A673 (cell line): ENCODE measurements at regions of chr20 and their contacts with region 1.

Region 1: DNA sequence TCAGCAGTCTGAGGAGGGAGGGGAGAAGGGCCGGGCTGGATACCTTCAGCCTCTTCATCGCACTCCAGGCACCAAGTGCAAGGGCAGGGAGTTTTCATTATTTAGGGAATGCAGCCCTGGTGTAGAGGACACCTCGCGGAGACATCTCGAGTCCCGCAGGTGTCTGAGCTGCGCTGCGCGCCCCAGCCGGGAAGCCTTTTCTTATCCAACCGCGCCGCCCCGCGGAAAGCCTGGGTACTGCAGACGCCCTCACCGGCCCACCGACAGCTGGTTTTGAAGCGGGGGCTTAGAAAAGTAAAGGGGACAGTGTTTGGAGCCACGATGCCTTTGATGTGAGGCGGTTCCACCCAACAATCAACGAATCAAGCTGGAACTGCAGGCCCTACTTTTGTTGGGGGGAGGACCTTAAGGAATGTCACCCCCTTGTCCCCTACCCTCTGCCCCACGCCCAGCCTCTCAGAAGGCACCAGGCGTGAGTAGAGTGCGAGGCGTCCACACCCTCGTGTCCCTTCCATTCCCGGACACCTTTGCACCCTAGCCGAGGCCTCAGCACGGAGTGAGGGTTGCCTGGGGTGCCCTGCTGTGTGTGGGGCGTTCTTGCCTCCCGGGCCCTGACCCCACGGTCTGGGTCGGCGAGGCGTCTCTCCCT is 8.6 kb downstream of the NKX2-2 start:
- DNase-seq: peak; percentile 77
- H3K4me3 ChIP-seq: peak overlapping the region; percentile 46
- H3K27ac ChIP-seq: peak overlapping the region; percentile 68
- H3K4me1 ChIP-seq: peaks cover 37% of the 10 kb centered on the region
- H3K27me3 ChIP-seq: no peaks in the 10 kb centered on the region
- CTCF ChIP-seq: peak; percentile 97

Region 2: GRCh38 chr20:20664795-20665589 is 840.3 kb before region 1 on chr20:
- CTCF ChIA-PET with region 1: no interaction called
- POLR2A ChIA-PET with region 1: no interaction called
- intact Hi-C with region 1: loop called (anchors 5 kb)
- DNase-seq: peak; percentile 70
- H3K4me3 ChIP-seq: no peak overlapping the region
- H3K27ac ChIP-seq: no peak overlapping the region
- H3K4me1 ChIP-seq: peaks cover 28% of the 10 kb centered on the region
- H3K27me3 ChIP-seq: no peaks in the 10 kb centered on the region
- CTCF ChIP-seq: peak; percentile 76

Region 3: GRCh38 chr20:20837574-20838021 is 667.7 kb before region 1 on chr20:
- CTCF ChIA-PET with region 1: interaction called, 7 read pairs
- POLR2A ChIA-PET with region 1: no interaction called
- intact Hi-C with region 1: loop called (anchors 5 kb)
- DNase-seq: peak; percentile 82
- H3K4me3 ChIP-seq: no peak overlapping the region
- H3K27ac ChIP-seq: no peak overlapping the region
- H3K4me1 ChIP-seq: no peaks in the 10 kb centered on the region
- H3K27me3 ChIP-seq: no peaks in the 10 kb centered on the region
- CTCF ChIP-seq: peak; percentile 88

Region 4: DNA sequence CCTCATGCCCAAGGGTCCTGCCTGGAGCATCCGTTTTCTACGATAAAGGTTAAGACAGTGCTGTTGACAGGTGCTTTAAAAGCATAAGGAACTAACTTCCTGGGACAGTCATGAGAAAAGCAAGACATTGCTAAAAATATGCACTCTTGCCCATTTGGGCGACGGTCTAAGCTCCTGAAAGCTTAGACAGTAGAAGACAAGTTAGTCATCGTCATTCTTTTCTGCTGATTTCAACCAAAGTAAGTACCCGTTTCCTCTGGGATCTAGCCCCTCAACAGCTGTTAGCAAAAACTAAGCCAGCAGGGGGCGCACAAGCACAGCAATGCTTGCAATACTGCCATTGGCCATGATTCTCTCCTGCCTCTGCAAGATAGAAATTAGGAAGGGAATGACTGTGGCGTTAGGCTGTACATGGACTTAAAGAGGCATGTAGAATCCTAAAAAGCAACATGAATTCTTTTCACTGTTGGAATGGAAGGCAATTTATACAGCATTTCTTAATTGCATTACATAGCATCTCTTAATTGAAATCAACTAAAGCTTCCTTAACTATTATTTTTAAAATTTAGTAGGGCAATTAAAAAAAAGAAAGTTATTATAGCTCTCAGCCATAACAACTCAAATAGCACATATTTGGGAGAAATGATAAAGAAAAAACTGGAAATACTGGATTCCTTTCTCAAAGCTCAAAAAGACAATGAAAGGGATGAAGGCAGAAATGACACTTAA is 645.0 kb before region 1 on chr20:
- CTCF ChIA-PET with region 1: interaction called, 6 read pairs
- POLR2A ChIA-PET with region 1: no interaction called
- intact Hi-C with region 1: loop called (anchors 2 kb)
- DNase-seq: peak; percentile 93
- H3K4me3 ChIP-seq: no peak overlapping the region
- H3K27ac ChIP-seq: no peak overlapping the region
- H3K4me1 ChIP-seq: no peaks in the 10 kb centered on the region
- H3K27me3 ChIP-seq: no peaks in the 10 kb centered on the region
- CTCF ChIP-seq: peak; percentile 97

Region 5: DNA sequence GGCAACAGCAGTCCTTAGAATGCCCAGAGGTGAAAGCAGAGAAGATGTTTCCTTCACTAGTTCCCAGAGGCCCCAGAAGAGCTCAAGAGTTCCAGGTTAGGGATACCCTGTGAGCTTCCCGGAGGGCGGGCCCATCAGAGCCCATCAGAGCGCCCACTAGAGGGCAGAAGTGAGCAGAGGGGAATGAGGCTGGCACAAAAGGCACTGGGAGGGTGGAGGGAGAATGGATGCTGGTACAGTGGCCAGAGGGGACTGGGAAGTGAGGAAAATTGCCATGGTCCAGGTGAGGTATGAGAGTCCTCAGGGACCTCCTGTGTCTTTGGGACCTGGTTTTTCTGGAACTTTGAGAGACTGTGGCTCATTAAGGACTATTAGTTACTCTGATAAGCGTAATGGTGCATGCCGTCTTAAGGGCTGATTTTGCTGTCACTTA is 456.4 kb before region 1 on chr20:
- CTCF ChIA-PET with region 1: no interaction called
- POLR2A ChIA-PET with region 1: no interaction called
- intact Hi-C with region 1: loop called (anchors 5 kb)
- DNase-seq: peak; percentile 59
- H3K4me3 ChIP-seq: no peak overlapping the region
- H3K27ac ChIP-seq: no peak overlapping the region
- H3K4me1 ChIP-seq: peaks cover 12% of the 10 kb centered on the region
- H3K27me3 ChIP-seq: peaks cover 35% of the 10 kb centered on the region
- CTCF ChIP-seq: peak; percentile 91

Region 6: GRCh38 chr20:23350196-23350903 is 1845.1 kb after region 1 on chr20 and contains the start of gene NXT1:
- CTCF ChIA-PET with region 1: no interaction called
- POLR2A ChIA-PET with region 1: no interaction called
- intact Hi-C with region 1: loop called (anchors 10 kb)
- DNase-seq: peak; percentile 98
- H3K4me3 ChIP-seq: peak within 1 kb of the TSS; percentile 96
- H3K27ac ChIP-seq: peak within 1 kb of the TSS; percentile 88
- H3K4me1 ChIP-seq: peaks cover 10% of the 10 kb centered on the region
- H3K27me3 ChIP-seq: no peaks in the 10 kb centered on the region
- CTCF ChIP-seq: no peak
- total RNA-seq, gene NXT1: 32.1 and 34.4 TPM in 2 replicates